ENCODE measurements at regions of chr10 and their contacts with region 1.

Region 1: DNA sequence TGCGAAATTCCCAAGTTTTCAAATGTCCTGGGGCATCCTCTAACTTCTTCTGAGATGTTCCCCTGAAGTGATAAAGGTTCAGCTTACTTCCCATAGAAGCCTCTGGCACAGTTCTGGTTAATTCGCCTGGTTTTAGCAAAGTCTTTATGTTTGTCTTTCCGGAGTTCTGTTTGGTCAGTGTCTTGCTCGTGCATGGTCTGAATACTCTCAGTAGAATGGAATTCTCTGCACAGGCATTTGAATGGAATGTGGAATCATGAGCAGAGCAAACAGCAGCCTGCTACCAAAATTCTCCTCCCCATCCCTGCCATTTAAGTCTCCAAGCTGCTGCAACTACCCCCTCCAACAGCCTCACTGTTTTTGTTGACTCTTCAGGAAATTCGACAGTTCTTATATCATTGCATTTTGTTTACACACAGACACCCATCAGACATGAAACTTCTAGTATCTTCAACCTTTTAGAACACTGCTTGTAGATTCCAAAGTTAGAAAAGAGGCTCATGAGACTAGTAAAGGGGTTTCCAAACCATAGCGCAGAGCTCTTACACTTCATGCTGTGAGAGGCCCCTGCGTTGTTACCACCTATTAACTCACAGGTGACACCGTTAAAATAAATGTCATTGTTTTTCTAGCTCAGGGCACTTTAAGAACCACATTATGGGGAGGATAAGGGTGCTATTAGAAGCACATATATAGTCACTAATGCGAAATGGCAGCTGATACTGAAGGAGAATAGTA is 129.7 kb downstream of the PLCE1 start:
- DNase-seq: peak; percentile 79 to 84
- H3K4me3 ChIP-seq: no peak overlapping the region
- H3K4me3 Mint-ChIP-seq: peak overlapping the region; percentile 47
- H3K27ac Mint-ChIP-seq: no peak overlapping the region
- H3K4me1 ChIP-seq: peaks cover 45% of the 10 kb centered on the region
- H3K4me1 Mint-ChIP-seq: peaks cover 22% of the 10 kb centered on the region
- H3K27me3 ChIP-seq: no peaks in the 10 kb centered on the region
- H3K27me3 Mint-ChIP-seq: no peaks in the 10 kb centered on the region
- CTCF ChIP-seq: no peak

Region 2: GRCh38 chr10:94083662-94084265 is 39.7 kb before region 1 on chr10:
- CTCF ChIA-PET with region 1: no interaction called
- POLR2A ChIA-PET with region 1: no interaction called
- intact Hi-C with region 1: loop called (anchors 1 kb)
- DNase-seq: no peak
- H3K4me3 ChIP-seq: no peak overlapping the region
- H3K4me3 Mint-ChIP-seq: no peak overlapping the region
- H3K27ac Mint-ChIP-seq: no peak overlapping the region
- H3K4me1 ChIP-seq: peaks cover 6% of the 10 kb centered on the region; the same call in 1 of the 2 replicates
- H3K4me1 Mint-ChIP-seq: peaks cover 5% of the 10 kb centered on the region
- H3K27me3 ChIP-seq: no peaks in the 10 kb centered on the region
- H3K27me3 Mint-ChIP-seq: no peaks in the 10 kb centered on the region
- CTCF ChIP-seq: no peak

Region 3: DNA sequence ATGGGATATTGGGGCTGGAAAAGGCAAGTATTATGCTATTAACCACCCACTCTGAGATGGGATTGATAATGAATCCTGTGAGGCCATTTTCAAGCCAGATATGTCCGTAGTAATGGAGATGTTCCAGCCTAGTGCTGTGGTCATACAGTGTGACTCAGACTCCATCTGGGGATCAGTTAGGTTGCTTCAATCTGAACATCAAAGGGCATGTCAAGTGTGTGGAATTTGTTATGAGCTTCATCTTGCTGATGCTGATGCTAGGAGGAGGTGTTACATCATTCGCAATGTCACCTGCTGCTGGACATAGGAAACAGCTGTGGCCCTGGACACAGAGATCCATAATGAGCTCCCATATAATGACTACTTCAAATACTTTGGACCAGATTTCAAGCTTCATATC is 15.0 kb after region 1 on chr10:
- CTCF ChIA-PET with region 1: no interaction called
- POLR2A ChIA-PET with region 1: no interaction called
- intact Hi-C with region 1: no loop called
- DNase-seq: no peak
- H3K4me3 ChIP-seq: no peak overlapping the region
- H3K4me3 Mint-ChIP-seq: no peak overlapping the region
- H3K27ac Mint-ChIP-seq: no peak overlapping the region
- H3K4me1 ChIP-seq: no peaks in the 10 kb centered on the region
- H3K4me1 Mint-ChIP-seq: no peaks in the 10 kb centered on the region
- H3K27me3 ChIP-seq: no peaks in the 10 kb centered on the region
- H3K27me3 Mint-ChIP-seq: no peaks in the 10 kb centered on the region
- CTCF ChIP-seq: no peak

Region 4: DNA sequence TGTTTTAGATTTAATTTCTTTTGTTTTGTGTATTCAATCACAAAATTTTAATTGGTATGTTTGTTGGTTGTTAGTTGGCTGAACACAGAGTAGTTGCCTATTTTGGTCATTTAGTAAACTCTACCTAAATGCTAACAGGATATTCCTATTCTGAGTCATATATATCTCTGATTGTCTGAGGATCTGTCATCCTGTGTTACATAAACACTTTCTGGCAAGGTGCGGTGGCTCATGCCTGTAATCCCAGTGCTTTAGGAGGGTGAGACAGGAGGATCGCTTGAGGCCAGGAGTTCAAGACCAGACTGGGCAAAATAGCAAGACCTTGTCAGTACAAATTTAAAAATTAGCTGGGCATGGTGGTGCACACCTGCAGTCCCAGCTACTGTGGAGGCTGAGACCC is 48.9 kb after region 1 on chr10:
- CTCF ChIA-PET with region 1: no interaction called
- POLR2A ChIA-PET with region 1: no interaction called
- intact Hi-C with region 1: no loop called
- DNase-seq: no peak
- H3K4me3 ChIP-seq: no peak overlapping the region
- H3K4me3 Mint-ChIP-seq: no peak overlapping the region
- H3K27ac Mint-ChIP-seq: no peak overlapping the region
- H3K4me1 ChIP-seq: no peaks in the 10 kb centered on the region
- H3K4me1 Mint-ChIP-seq: peaks cover 7% of the 10 kb centered on the region
- H3K27me3 ChIP-seq: no peaks in the 10 kb centered on the region
- H3K27me3 Mint-ChIP-seq: no peaks in the 10 kb centered on the region
- CTCF ChIP-seq: no peak

Measured in Caco-2 (cell line).